ACHN (cell line): ENCODE measurements at regions of chr3 and their contacts with region 1.

Region 1: GRCh38 chr3:78988324-78988723 is 779.5 kb downstream of the ROBO1 start:
- DNase-seq: peak; percentile 46

Region 2: GRCh38 chr3:78659386-78659987 is 328.8 kb before region 1 on chr3:
- in situ Hi-C with region 1: loop called (anchors 25 kb)
- DNase-seq: peak; percentile 37

Region 3: DNA sequence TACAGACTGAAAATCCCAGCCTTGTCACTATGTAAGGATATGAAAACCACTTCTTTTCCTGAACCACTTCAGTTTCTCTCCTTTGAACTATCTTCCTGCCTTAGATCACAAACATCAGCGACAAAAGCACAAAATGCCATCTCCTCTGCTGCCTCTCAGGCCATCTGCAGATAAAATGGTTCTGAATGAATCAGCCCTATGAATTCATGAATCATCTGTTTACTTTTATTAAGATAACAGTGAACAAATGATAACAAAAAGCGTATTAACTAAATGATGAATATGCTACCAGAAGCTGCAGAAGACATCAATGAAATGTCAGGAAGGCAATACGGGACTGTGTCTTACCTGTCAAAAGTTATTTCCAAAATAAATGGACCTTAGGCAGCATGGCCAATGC is 148.6 kb before region 1 on chr3:
- in situ Hi-C with region 1: no loop called
- DNase-seq: no peak